GM10248 (cell line): ENCODE measurements at regions of chr20 and their contacts with region 1.

Region 1: GRCh38 chr20:38633577-38634093 is 32.0 kb downstream of the ARHGAP40 start:
- DNase-seq: peak; percentile 83
- CTCF ChIP-seq: peak; percentile 94

Region 2: DNA sequence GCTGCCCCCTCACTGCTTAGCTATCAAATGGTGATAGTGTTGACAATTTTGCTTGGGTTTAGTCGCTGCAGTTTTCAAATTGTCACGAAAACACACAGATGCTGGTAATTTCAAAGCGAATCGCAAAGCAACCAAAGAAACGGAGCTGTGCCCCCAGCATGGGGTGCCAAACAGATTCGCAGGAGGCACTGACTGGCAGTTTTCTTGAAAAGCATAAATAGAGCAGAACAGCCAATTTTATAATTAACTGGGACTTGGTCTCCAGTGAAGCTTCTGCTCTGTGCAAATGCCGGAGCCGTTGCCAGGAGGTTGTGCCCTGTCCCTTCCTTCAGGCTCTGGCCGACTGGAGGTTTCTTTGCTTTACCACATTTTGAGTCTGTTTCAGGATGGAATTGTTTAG is 13.2 kb before region 1 on chr20:
- CTCF ChIA-PET with region 1: interaction called, 13 read pairs
- POLR2A ChIA-PET with region 1: no interaction called
- DNase-seq: no peak
- CTCF ChIP-seq: no peak